IMR-90 (cell line): ENCODE measurements at regions of chr18 and their contacts with region 1.

Region 1: DNA sequence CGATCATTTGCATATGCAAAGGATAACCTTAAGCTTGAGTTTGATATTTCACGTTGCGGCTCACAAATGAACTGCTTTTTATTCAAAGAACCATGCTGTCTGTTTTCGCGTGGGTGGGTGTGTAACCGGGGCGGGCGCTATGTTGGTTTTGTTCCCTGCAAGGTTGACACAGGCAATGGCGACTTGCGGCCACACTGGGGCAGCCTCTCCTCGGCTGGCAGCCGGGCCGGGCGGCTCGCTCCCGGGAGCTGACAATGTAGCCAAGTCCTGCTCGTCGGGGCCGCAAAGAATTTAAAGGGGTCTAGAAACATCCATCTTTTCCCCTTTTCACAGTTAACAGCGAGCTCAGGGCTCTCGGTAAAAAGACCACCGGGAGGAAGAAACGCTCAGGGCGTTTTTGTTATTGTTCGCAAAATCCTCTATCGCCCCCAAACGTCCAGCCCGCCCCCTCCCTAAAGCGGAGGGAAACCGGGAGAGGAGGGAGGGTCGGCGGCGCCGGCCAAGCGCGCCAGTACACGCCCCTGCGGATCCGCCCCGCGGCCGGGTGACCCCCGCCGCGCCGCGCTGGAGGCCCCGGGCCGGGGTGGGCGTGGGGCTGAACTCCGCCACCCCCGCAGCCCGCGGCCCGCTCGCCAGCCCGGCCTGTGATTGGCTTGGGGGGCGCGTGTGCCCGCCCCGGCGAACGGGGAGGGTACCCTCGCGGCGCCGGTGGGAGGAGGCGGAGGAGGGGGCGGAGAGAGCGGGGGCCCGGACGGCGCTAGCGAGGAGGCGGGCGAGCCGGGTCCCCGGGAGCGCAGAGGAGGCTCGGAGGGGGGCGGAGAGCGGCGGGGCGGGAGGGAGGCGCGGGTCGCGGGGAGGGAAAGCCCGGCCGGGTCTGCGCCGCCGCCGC is at the start of gene NEDD4L:
- DNase-seq: peak; percentile 83
- ATAC-seq: peak; percentile 90
- H3K4me3 ChIP-seq: peak within 1 kb of the TSS; percentile 79
- H3K27ac ChIP-seq: peak within 1 kb of the TSS; percentile 58
- H3K4me1 ChIP-seq: peaks cover 5% of the 10 kb centered on the region
- H3K27me3 ChIP-seq: peaks cover 2% of the 10 kb centered on the region
- CTCF ChIP-seq: peak; percentile 95
- POLR2A ChIP-seq: peak; percentile 54; the same call in 1 of the 2 replicates
- RAD21 ChIP-seq: peak; percentile 92
- total RNA-seq, gene NEDD4L: 10.0 and 12.8 TPM in 2 replicates

Region 2: GRCh38 chr18:57881818-57882413 is 161.8 kb before region 1 on chr18:
- CTCF ChIA-PET with region 1: interaction called, 11 read pairs
- POLR2A ChIA-PET with region 1: no interaction called
- dilution Hi-C with region 1: no loop called
- in situ Hi-C with region 1: no loop called
- intact Hi-C with region 1: loop called (anchors 1 kb)
- DNase-seq: peak; percentile 86
- ATAC-seq: peak; percentile 100
- H3K4me3 ChIP-seq: no peak overlapping the region
- H3K27ac ChIP-seq: no peak overlapping the region
- H3K4me1 ChIP-seq: no peaks in the 10 kb centered on the region
- H3K27me3 ChIP-seq: 0 out of 2 replicates have a peak, but pooled peaks cover 2% of the 10 kb centered on the region
- CTCF ChIP-seq: peak; percentile 97
- POLR2A ChIP-seq: 0 out of 2 replicates have a peak, but pooled peaks have one; percentile 25
- RAD21 ChIP-seq: peak; percentile 99

Region 3: DNA sequence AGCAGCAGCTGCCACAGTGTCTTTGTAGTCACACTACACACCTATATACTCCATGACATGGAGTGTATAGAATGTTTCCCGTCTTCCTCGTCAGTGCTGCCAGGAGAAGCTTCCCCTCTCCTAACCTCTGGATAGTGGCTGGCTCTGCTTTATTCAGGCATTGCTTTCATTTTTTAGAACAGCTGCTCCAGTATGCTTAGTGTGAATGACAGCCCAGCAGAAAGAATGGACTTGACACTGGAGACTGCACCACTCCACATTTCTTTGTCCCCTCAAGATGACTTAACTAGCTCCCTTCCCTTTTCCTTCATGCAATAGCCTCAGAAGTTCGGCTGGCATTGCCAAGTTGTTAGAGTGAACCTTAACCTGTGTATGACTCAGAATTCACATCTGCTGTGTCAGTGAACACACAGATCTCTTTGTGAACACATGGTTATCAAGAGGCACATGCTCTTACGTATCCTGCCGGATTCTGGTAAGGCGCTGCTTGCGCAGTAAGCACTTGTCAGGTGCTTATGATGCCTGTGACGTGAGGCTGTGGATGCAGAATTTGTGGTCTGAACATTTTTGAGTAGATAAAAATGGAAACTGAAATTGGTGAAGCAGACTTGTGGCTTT is 74.2 kb after region 1 on chr18:
- CTCF ChIA-PET with region 1: interaction called, 12 read pairs
- POLR2A ChIA-PET with region 1: no interaction called
- dilution Hi-C with region 1: no loop called
- in situ Hi-C with region 1: no loop called
- intact Hi-C with region 1: loop called (anchors 1 kb)
- DNase-seq: peak; percentile 98
- ATAC-seq: peak; percentile 79
- H3K4me3 ChIP-seq: no peak overlapping the region
- H3K27ac ChIP-seq: no peak overlapping the region
- H3K4me1 ChIP-seq: peaks cover 8% of the 10 kb centered on the region
- H3K27me3 ChIP-seq: no peaks in the 10 kb centered on the region
- CTCF ChIP-seq: no peak
- POLR2A ChIP-seq: no peak
- RAD21 ChIP-seq: no peak

Region 4: GRCh38 chr18:58195278-58195765 is 151.6 kb after region 1 on chr18:
- CTCF ChIA-PET with region 1: no interaction called
- POLR2A ChIA-PET with region 1: no interaction called
- dilution Hi-C with region 1: no loop called
- in situ Hi-C with region 1: no loop called
- intact Hi-C with region 1: no loop called
- DNase-seq: no peak
- ATAC-seq: no peak
- H3K4me3 ChIP-seq: no peak overlapping the region
- H3K27ac ChIP-seq: no peak overlapping the region
- H3K4me1 ChIP-seq: peaks cover 7% of the 10 kb centered on the region
- H3K27me3 ChIP-seq: no peaks in the 10 kb centered on the region
- CTCF ChIP-seq: no peak
- POLR2A ChIP-seq: no peak
- RAD21 ChIP-seq: no peak

Region 5: DNA sequence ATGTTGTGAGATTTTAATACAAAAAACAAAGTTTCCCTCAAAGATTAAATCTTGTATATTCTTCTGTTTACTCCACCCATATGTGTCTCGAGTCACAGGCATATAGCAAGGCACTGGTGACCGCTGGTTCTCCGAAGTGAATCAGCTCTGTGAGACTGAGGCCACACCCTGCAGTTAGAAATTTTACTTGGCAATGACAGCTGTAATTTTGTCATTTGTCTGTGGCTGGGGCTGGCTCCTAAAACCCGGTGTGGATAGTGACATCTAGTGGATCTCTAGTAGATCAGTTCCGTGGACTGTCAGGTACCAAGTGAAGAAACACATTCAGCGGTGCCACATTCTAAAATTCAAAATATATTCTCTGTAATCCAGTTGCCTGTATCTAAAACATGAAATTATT is 278.3 kb after region 1 on chr18:
- CTCF ChIA-PET with region 1: no interaction called
- POLR2A ChIA-PET with region 1: no interaction called
- dilution Hi-C with region 1: no loop called
- in situ Hi-C with region 1: no loop called
- intact Hi-C with region 1: loop called (anchors 1 kb)
- DNase-seq: peak; percentile 74
- ATAC-seq: peak; percentile 91
- H3K4me3 ChIP-seq: no peak overlapping the region
- H3K27ac ChIP-seq: no peak overlapping the region
- H3K4me1 ChIP-seq: peaks cover 6% of the 10 kb centered on the region; the same call in 1 of the 2 replicates
- H3K27me3 ChIP-seq: no peaks in the 10 kb centered on the region
- CTCF ChIP-seq: peak; percentile 62
- POLR2A ChIP-seq: no peak
- RAD21 ChIP-seq: peak; percentile 88

Region 6: GRCh38 chr18:58761241-58761969 is 717.7 kb after region 1 on chr18:
- CTCF ChIA-PET with region 1: no interaction called
- POLR2A ChIA-PET with region 1: no interaction called
- dilution Hi-C with region 1: no loop called
- in situ Hi-C with region 1: loop called (anchors 10 kb)
- intact Hi-C with region 1: loop called (anchors 5 kb)
- DNase-seq: peak; percentile 40
- ATAC-seq: no peak
- H3K4me3 ChIP-seq: no peak overlapping the region
- H3K27ac ChIP-seq: no peak overlapping the region
- H3K4me1 ChIP-seq: no peaks in the 10 kb centered on the region
- H3K27me3 ChIP-seq: peaks cover 14% of the 10 kb centered on the region
- CTCF ChIP-seq: no peak
- POLR2A ChIP-seq: no peak
- RAD21 ChIP-seq: no peak

Region 7: GRCh38 chr18:59725142-59725541 is 1681.4 kb after region 1 on chr18:
- CTCF ChIA-PET with region 1: no interaction called
- POLR2A ChIA-PET with region 1: no interaction called
- dilution Hi-C with region 1: no loop called
- in situ Hi-C with region 1: no loop called
- intact Hi-C with region 1: no loop called
- DNase-seq: no peak
- ATAC-seq: peak; percentile 85
- H3K4me3 ChIP-seq: no peak overlapping the region
- H3K27ac ChIP-seq: no peak overlapping the region
- H3K4me1 ChIP-seq: peaks cover 4% of the 10 kb centered on the region; the same call in 1 of the 2 replicates
- H3K27me3 ChIP-seq: no peaks in the 10 kb centered on the region
- CTCF ChIP-seq: no peak
- POLR2A ChIP-seq: no peak
- RAD21 ChIP-seq: no peak